Panc1 (cell line): ENCODE measurements at regions of chr16 and their contacts with region 1.

Region 1: DNA sequence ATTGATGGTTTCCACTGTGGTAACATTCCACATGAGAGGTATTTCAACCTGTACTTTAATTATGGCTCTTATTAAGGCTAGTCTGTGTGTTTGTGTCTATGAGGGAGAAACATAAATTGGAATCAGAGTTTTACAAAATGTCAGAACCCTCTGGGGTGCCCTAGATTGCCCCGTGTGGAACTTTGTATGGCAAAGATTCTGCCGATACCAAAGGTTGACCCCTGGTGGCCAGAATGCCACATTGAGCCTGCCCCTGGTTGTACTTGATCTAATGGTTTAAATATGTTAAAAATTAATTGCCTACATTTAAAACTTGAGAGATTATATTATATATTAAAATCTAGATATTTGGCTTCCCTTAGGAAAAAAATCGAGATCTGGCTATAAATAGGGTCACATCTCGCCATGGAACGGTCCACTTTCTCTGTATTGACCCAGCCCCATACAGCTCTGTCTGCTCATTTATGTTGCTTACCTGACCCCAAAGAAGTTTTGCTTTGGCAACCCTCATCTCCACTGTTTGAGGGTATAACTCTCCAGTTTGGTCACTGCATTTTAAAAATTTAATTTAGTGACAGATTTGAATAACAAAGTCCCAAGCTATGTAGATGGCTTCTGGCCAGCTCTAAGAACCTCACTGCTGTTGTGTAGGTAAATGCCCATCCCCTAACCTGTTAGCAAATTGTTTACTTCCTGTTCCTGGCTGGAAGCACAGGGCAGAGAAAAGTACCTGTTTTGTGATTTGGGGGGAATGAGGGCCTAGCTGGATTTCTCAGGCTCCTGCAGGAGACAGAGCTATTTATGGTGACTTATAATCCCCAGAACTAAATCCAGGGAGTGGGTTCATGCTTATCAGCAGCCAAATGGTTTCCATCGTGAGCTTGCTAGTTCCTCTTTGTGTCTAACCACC is 95.0 kb downstream of the PLCG2 start:
- DNase-seq: no peak
- ATAC-seq: peak; percentile 83
- H3K4me3 ChIP-seq: no peak overlapping the region
- H3K27ac ChIP-seq: no peak overlapping the region
- H3K4me1 ChIP-seq: no peaks in the 10 kb centered on the region
- H3K27me3 ChIP-seq: no peaks in the 10 kb centered on the region
- CTCF ChIP-seq: peak; percentile 87

Region 2: GRCh38 chr16:81181013-81181720 is 692.9 kb before region 1 on chr16:
- CTCF ChIA-PET with region 1: no interaction called
- POLR2A ChIA-PET with region 1: interaction called, 10 read pairs
- in situ Hi-C with region 1: no loop called
- intact Hi-C with region 1: no loop called
- DNase-seq: peak; percentile 64
- ATAC-seq: peak; percentile 93
- H3K4me3 ChIP-seq: peak overlapping the region in 1 of 2 experiments; percentile 23; a peak in 1 of 4 replicates
- H3K27ac ChIP-seq: peak overlapping the region; percentile 75; the same call in 1 of the 2 replicates
- H3K4me1 ChIP-seq: peaks cover 3% of the 10 kb centered on the region; the same call in 1 of the 2 replicates
- H3K27me3 ChIP-seq: no peaks in the 10 kb centered on the region
- CTCF ChIP-seq: no peak

Region 3: DNA sequence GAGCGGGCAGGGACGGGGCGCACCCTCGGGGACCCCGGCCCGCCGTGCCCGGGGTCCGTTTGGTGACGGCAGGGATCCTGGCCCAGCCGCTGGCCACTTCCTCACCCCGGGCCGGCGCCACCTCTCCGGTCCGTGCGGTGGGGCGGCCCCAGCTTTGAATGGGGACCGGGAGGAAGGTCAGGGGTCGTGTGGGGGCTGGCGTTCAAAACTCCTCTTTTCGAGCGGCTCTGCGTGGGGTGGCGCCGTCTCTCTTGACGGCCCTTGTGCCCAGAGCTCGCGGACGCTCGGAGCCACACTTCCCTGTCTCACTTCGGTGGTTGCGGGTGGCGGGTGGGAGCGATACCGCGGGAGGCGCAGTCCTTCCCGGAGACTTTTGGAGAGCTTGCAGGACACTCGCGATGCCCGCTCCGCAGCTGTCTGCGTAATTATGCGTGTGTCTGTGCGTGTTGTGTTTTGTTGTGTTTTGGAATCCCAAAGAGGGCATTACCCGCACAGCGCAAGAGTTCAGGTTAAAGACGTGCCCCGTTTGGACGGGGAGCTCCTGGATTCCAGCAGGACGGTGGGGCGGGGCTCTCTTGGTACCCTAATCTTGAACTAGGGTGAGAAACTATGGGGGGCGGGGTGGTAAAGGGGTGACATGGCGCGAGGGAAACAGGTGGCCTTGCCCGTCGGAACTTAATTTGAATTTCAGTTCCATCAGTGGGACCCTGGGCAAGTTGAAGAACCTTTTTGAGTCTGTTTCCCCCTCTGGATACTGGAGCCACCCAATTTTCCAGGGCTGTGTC is 94.4 kb before region 1 on chr16:
- CTCF ChIA-PET with region 1: no interaction called
- POLR2A ChIA-PET with region 1: no interaction called
- in situ Hi-C with region 1: no loop called
- intact Hi-C with region 1: loop called (anchors 10 kb)
- DNase-seq: no peak
- ATAC-seq: peak; percentile 58
- H3K4me3 ChIP-seq: peak overlapping the region; percentile 49 to 52
- H3K27ac ChIP-seq: no peak overlapping the region
- H3K4me1 ChIP-seq: no peaks in the 10 kb centered on the region
- H3K27me3 ChIP-seq: no peaks in the 10 kb centered on the region
- CTCF ChIP-seq: no peak

Region 4: GRCh38 chr16:81996664-81997622 is 122.8 kb after region 1 on chr16:
- CTCF ChIA-PET with region 1: no interaction called
- POLR2A ChIA-PET with region 1: no interaction called
- in situ Hi-C with region 1: no loop called
- intact Hi-C with region 1: no loop called
- DNase-seq: no peak
- ATAC-seq: peak; percentile 78; the same call in 1 of the 2 replicates
- H3K4me3 ChIP-seq: no peak overlapping the region
- H3K27ac ChIP-seq: no peak overlapping the region
- H3K4me1 ChIP-seq: 0 out of 2 replicates have a peak, but pooled peaks cover 2% of the 10 kb centered on the region
- H3K27me3 ChIP-seq: no peaks in the 10 kb centered on the region
- CTCF ChIP-seq: peak; percentile 31